ENCODE measurements at regions of chr19 and their contacts with region 1.

Region 1: DNA sequence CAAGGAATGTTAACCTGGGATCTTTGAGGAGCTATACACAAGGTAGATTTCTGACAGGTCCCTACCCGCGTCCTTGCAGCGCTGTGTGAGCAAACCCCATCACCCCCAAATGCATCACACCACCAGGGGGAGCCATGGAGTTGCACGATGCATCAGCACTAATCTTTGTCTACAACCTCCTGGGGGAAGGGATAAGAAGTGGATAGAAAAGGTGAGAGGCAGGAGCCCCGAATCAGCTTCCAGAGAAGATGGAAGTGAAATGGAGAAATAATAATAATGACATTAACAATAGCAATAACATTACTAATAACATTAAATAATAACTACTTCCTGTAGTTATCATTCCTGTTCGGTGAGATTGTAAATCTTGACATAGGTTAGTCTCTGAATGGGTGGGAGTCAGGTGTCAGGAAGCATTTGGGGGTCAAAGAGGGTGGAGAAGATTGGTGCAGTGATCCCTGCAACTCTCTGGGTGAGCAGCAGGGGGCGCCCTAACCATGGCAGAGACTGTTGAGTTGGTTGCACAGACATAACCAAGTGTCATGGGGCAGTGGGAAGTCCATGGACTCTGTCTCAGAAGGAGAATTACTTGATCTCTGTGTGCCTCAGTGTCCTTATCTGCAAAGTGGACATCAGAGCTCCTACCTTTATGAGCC is 16.5 kb downstream of the SIGLEC7 start:
- DNase-seq: peak; percentile 86
- H3K4me3 Mint-ChIP-seq: no peak overlapping the region
- H3K27ac Mint-ChIP-seq: no peak overlapping the region
- H3K4me1 Mint-ChIP-seq: peaks cover 6% of the 10 kb centered on the region
- H3K27me3 Mint-ChIP-seq: peaks cover 5% of the 10 kb centered on the region

Region 2: DNA sequence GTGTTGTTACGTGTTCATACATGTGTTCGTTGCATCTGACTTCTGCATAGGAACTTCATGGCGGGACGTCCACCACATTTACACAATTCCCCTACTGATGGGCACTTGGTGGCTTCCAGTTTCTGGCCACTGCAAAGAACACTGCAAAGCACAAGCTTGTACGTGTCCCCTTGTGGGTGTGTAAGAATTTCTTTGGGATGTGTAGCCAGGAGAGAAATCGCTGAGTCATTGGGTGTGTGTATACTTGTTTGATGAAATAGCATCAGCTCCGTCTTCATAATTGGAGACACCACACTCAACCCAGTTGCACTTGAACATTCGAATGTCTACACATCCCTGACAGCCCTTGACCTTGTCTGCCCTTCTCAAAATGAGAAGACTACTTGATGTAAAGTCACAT is 225.0 kb before region 1 on chr19:
- CTCF ChIA-PET with region 1: no interaction called
- POLR2A ChIA-PET with region 1: no interaction called
- intact Hi-C with region 1: no loop called
- DNase-seq: no peak
- H3K4me3 Mint-ChIP-seq: no peak overlapping the region
- H3K27ac Mint-ChIP-seq: no peak overlapping the region
- H3K4me1 Mint-ChIP-seq: no peaks in the 10 kb centered on the region
- H3K27me3 Mint-ChIP-seq: peaks cover 17% of the 10 kb centered on the region

Region 3: DNA sequence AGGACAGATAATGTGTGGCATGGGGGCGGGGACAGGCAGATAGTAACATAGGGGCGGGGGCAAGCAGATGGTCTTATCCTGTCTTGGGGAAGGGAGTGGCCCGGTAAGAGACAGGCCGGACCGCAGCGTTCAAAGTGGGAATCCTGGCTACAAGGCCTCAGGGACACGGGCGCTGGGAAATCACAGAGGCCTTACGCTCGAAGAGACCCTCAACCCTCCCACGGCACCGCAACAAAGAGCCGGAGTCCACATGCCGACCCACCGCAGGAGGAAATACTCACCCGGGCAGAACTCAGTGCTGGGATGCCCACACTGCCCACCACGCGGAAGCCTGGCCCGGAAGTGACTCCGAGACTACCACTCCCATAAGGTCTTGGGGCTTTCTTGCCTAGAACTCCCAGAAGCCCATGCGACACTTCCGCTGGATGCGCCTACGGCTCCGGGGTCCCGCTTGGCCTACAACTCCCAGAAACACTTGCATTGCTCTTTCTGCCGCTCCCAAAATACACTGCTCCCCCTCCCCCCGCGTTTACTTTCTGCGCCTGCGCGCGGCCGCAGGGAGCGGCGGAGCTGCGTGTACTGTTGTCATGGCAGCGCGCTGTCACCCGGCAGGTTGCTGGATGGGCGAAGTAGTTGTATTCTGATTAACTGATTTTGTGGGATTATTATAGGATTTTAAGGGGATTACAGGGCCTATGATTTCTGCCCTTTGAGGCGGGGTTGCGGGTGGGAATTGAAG is 50.4 kb before region 1 on chr19 and contains the start of gene CTU1:
- CTCF ChIA-PET with region 1: interaction called, 6 read pairs
- POLR2A ChIA-PET with region 1: no interaction called
- intact Hi-C with region 1: loop called (anchors 5 kb)
- DNase-seq: peak; percentile 99
- H3K4me3 Mint-ChIP-seq: peak within 1 kb of the TSS; percentile 93
- H3K27ac Mint-ChIP-seq: peak within 1 kb of the TSS; percentile 81
- H3K4me1 Mint-ChIP-seq: peaks cover 35% of the 10 kb centered on the region
- H3K27me3 Mint-ChIP-seq: no peaks in the 10 kb centered on the region
- total RNA-seq, gene CTU1: 8.8 to 9.8 TPM

Region 4: GRCh38 chr19:51147663-51148062 is 10.9 kb before region 1 on chr19:
- CTCF ChIA-PET with region 1: interaction called, 10 read pairs
- POLR2A ChIA-PET with region 1: no interaction called
- intact Hi-C with region 1: no loop called
- DNase-seq: no peak
- H3K4me3 Mint-ChIP-seq: no peak overlapping the region
- H3K27ac Mint-ChIP-seq: no peak overlapping the region
- H3K4me1 Mint-ChIP-seq: no peaks in the 10 kb centered on the region
- H3K27me3 Mint-ChIP-seq: peaks cover 2% of the 10 kb centered on the region

Region 5: GRCh38 chr19:51168564-51169282 is 10.1 kb after region 1 on chr19:
- CTCF ChIA-PET with region 1: interaction called, 36 read pairs
- POLR2A ChIA-PET with region 1: no interaction called
- intact Hi-C with region 1: no loop called
- DNase-seq: no peak
- H3K4me3 Mint-ChIP-seq: no peak overlapping the region
- H3K27ac Mint-ChIP-seq: no peak overlapping the region
- H3K4me1 Mint-ChIP-seq: peaks cover 20% of the 10 kb centered on the region
- H3K27me3 Mint-ChIP-seq: peaks cover 11% of the 10 kb centered on the region

Region 6: GRCh38 chr19:51259348-51260245 is 101.0 kb after region 1 on chr19:
- CTCF ChIA-PET with region 1: interaction called, 86 read pairs
- POLR2A ChIA-PET with region 1: no interaction called
- intact Hi-C with region 1: loop called (anchors 1 kb)
- DNase-seq: peak; percentile 67
- H3K4me3 Mint-ChIP-seq: no peak overlapping the region
- H3K27ac Mint-ChIP-seq: no peak overlapping the region
- H3K4me1 Mint-ChIP-seq: peaks cover 14% of the 10 kb centered on the region
- H3K27me3 Mint-ChIP-seq: peaks cover 21% of the 10 kb centered on the region